Transverse colon (tissue), 4 donors: ENCODE measurements at regions of chr17 and their contacts with region 1.

Region 1: GRCh38 chr17:7014261-7014994 is 2.0 kb downstream of the RNASEK start:
- DNase-seq: peak; percentile 99
- H3K4me3 ChIP-seq: peak overlapping the region; percentile 73 to 97 (median 84)
- H3K27ac ChIP-seq: peak overlapping the region; percentile 95 to 98 (median 96)
- H3K4me1 ChIP-seq: peaks cover 15 to 67% (median 40%) of the 10 kb centered on the region in 4 donors
- H3K27me3 ChIP-seq: no peaks in the 10 kb centered on the region
- CTCF ChIP-seq: peak; percentile 39 to 90 (median 75)
- EP300 ChIP-seq: peak; percentile 36
- POLR2A ChIP-seq: peak; percentile 96

Region 2: GRCh38 chr17:6651357-6651918 is 363.0 kb before region 1 on chr17 and contains the starts of genes C17orf100 and MED31:
- in situ Hi-C with region 1: loop called in 2 of 4 experiments (anchors 25 kb)
- intact Hi-C with region 1: no loop called
- DNase-seq: peak; percentile 98
- H3K4me3 ChIP-seq: peak within 1 kb of the TSS; percentile 63 to 90 (median 80)
- H3K27ac ChIP-seq: peak within 1 kb of the TSS; percentile 94 to 97 (median 96)
- H3K4me1 ChIP-seq: peaks cover 13 to 48% (median 28%) of the 10 kb centered on the region in 4 donors
- H3K27me3 ChIP-seq: peaks cover 24% of the 10 kb centered on the region
- CTCF ChIP-seq: no peak
- EP300 ChIP-seq: no peak
- POLR2A ChIP-seq: peak; percentile 82
- total RNA-seq, gene C17orf100: 1.4 to 1.7 TPM in 2 of 4 donors, not detected in the others
- total RNA-seq, gene MED31: 1.2 to 36.3 (median 5.9) TPM

Region 3: GRCh38 chr17:7266784-7267183 is 252.4 kb after region 1 on chr17:
- in situ Hi-C with region 1: no loop called
- intact Hi-C with region 1: no loop called
- DNase-seq: no peak
- H3K4me3 ChIP-seq: no peak overlapping the region
- H3K27ac ChIP-seq: peak overlapping the region; percentile 80 to 82 (median 82)
- H3K4me1 ChIP-seq: peaks cover 0 to 59% (median 26%) of the 10 kb centered on the region in 4 donors
- H3K27me3 ChIP-seq: peaks cover 30% of the 10 kb centered on the region
- CTCF ChIP-seq: no peak
- EP300 ChIP-seq: no peak
- POLR2A ChIP-seq: no peak